Activated CD8-positive, alpha-beta memory T cell treated with anti-CD3 and anti-CD28 coated beads, Interleukin-2, amount 10 ng/mL, durations not matched to agents 7 days and 5 days (primary cell): ENCODE measurements at regions of chr1 and their contacts with region 1.

Region 1: GRCh38 chr1:60989749-60990713 is 92.3 kb upstream of the NFIA start:
- DNase-seq: no peak
- ATAC-seq: no peak
- H3K4me3 Mint-ChIP-seq: no peak overlapping the region
- H3K27ac Mint-ChIP-seq: no peak overlapping the region
- H3K4me1 Mint-ChIP-seq: peaks cover 6% of the 10 kb centered on the region
- H3K27me3 Mint-ChIP-seq: peaks cover 26% of the 10 kb centered on the region

Region 2: DNA sequence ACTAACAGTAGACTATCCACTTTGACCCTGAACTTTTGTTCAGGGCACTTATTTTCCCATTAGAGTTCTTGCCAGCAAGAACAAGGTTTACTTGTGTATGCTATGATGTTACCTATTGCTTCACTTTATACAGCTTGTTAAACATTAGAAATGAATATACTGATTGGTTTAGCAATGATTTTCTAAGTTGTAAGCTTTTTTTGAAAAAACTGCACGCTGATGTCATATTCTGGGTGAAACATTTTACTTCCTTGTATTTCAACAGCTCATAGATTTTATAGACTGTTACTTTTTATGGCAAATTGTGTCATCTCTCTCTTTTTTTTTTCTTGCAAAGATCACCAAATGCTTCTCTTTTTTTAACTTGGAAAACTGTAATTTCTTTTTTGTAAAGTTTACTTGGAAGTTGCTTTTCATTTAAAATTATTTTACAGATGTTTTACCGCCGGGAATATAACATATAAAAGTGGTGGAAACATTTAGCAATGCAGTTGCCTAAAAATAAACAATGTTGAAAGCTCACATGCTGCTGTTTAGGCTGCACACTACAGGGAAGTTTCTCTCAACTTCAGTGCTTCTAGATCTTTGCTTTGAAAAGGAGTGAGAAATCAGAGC is 123.0 kb before region 1 on chr1:
- CTCF ChIA-PET with region 1: no interaction called
- DNase-seq: no peak
- ATAC-seq: no peak
- H3K4me3 Mint-ChIP-seq: no peak overlapping the region
- H3K27ac Mint-ChIP-seq: no peak overlapping the region
- H3K4me1 Mint-ChIP-seq: no peaks in the 10 kb centered on the region
- H3K27me3 Mint-ChIP-seq: peaks cover 13% of the 10 kb centered on the region

Region 3: DNA sequence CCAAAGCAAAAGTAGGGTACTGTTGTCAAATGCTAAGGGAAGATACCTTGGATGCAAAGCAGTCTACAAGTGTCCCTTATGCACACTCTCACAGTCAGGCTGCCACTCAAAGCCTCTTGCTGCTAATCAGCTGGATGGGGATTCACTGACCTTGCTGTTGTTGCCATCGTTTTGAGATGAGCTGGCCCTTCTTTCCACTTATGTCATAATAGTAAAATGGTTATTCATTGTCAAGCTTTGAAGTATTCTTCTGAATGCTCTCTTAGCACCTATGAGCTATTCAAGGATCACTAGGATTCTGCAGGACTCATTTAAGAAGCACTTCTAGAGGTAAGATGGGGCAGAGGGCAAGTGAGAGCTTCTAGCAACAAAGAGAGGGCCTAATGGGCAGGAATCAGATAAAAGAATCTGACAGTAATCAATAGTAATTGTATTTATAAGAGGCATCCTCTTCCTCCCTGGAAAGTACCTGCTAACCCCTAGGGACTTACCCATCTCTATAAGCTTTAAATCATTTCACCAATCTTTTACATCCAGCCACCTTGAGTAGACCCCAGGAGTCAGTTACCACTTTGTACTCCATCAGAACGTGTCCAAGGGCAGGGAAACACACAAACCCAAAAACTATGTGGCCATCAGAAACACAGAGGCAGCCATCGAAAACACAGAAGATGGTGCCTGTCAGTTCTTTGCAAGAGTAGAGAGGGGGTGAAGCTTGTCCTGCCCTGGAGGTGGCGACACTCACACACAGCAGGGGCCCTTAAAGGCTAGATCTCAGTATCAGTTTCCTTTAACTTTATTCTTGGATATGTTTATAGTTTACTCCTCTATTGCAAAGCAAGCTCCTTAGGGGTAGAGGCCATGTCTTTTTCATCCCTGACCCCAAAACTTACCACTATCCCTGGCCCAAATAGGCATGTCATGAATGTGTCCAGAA is 11.3 kb before region 1 on chr1:
- CTCF ChIA-PET with region 1: interaction called, 13 read pairs
- DNase-seq: peak; percentile 66
- ATAC-seq: peak; percentile 84
- H3K4me3 Mint-ChIP-seq: no peak overlapping the region
- H3K27ac Mint-ChIP-seq: no peak overlapping the region
- H3K4me1 Mint-ChIP-seq: peaks cover 3% of the 10 kb centered on the region
- H3K27me3 Mint-ChIP-seq: peaks cover 7% of the 10 kb centered on the region